ENCODE measurements at regions of chr17 and their contacts with region 1.

Region 1: GRCh38 chr17:7989781-7990655 is 12.4 kb upstream of the GUCY2D start:
- DNase-seq: peak; percentile 89
- H3K4me3 Mint-ChIP-seq: peak overlapping the region; percentile 71
- H3K27ac Mint-ChIP-seq: no peak overlapping the region
- H3K4me1 Mint-ChIP-seq: no peaks in the 10 kb centered on the region
- H3K27me3 Mint-ChIP-seq: peaks cover 18% of the 10 kb centered on the region
- CTCF ChIP-seq: peak; percentile 76

Region 2: DNA sequence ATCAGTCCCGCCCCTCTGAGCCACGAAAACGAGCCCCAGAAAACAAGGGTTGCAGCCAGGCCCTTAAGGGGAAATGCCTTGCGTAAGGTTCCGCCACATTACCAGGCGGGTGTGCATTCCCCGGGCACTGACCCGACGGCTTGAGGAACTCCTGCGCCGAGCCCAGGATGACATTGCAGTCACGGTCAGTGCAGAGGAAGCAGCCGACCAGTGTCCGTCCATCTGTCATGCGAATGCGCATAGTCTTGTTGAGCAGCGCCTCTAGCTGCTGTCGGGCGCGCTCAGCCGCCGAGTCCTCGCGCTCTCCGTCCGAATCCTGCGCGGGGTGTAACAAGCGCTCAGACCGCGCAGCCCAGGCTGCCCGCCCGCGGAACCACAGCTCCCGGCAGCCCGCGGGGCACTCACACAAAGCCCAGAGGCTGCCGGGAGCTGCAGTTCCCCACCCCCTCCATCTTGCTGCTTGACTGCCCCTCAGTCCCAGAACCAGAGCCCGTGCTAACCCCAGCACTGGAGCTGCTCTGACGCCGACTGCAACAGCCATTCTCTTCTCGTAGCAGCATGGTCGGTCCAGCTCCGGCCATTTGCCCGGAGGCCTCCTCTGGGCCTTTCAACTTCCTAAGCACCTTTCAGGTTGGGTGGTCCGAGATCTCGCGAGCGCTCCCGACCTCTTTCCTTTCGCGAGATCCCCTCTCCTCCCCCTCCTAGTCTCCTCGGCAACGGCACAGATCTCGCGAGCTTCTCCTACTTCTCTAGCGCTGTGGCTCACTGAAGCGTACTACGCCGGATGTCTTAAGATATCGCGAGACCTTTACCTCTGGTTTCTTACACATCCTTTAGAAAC is 132.9 kb before region 1 on chr17 and contains the start of gene NAA38:
- CTCF ChIA-PET with region 1: interaction called, 5 read pairs
- intact Hi-C with region 1: loop called (anchors 2 kb)
- DNase-seq: peak; percentile 91
- H3K4me3 Mint-ChIP-seq: no peak within 1 kb of the TSS
- H3K27ac Mint-ChIP-seq: no peak within 1 kb of the TSS
- H3K4me1 Mint-ChIP-seq: no peaks in the 10 kb centered on the region
- H3K27me3 Mint-ChIP-seq: no peaks in the 10 kb centered on the region
- CTCF ChIP-seq: no peak
- total RNA-seq, gene NAA38: 36.3 and 36.6 TPM in 2 replicates

Region 3: DNA sequence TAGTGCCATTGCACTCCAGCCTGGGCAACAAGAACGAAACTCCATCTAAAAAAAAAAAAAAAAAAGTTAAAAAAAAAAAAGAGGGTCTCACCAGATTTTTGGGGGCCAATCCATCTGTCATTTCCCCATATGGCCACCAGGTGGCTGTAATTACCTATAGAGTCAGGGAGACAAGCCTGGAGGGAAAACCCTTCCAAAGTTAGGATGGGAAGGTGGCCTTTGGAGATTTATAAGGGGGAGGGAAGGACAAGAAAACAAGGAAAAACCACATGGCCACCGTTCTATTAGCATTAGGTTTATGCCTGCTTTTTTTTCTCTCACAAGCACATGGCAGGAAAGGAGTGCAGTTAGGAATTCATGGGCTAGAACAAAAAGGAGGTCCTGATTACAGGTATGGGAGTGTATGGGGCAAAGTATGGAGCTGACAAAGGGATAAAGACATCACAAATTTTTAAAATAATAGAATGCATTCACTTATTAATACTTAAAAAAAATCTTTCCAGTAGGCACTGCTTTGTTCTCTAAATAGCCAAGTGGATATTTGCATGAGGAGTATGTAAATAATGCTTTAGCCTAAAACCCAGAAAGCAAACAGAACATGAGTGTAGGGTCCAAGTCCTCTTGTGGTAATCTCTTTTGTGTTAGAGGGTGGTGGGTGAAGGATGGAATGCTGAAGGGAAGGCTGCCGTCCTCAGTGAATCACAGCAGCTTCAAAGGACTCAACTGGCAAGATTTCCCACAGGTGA is 127.2 kb before region 1 on chr17:
- CTCF ChIA-PET with region 1: interaction called, 5 read pairs
- intact Hi-C with region 1: loop called (anchors 2 kb)
- DNase-seq: peak; percentile 32
- H3K4me3 Mint-ChIP-seq: no peak overlapping the region
- H3K27ac Mint-ChIP-seq: no peak overlapping the region
- H3K4me1 Mint-ChIP-seq: peaks cover 9% of the 10 kb centered on the region
- H3K27me3 Mint-ChIP-seq: no peaks in the 10 kb centered on the region
- CTCF ChIP-seq: peak; percentile 68

Region 4: GRCh38 chr17:7915611-7916382 is 74.2 kb before region 1 on chr17 and contains the start of gene RNF227:
- CTCF ChIA-PET with region 1: interaction called, 10 read pairs
- intact Hi-C with region 1: loop called (anchors 2 kb)
- DNase-seq: peak; percentile 83
- H3K4me3 Mint-ChIP-seq: peak within 1 kb of the TSS; percentile 66
- H3K27ac Mint-ChIP-seq: peak within 1 kb of the TSS; percentile 60
- H3K4me1 Mint-ChIP-seq: no peaks in the 10 kb centered on the region
- H3K27me3 Mint-ChIP-seq: no peaks in the 10 kb centered on the region
- CTCF ChIP-seq: no peak
- total RNA-seq, gene RNF227: 1.4 and 2.0 TPM in 2 replicates

Region 5: DNA sequence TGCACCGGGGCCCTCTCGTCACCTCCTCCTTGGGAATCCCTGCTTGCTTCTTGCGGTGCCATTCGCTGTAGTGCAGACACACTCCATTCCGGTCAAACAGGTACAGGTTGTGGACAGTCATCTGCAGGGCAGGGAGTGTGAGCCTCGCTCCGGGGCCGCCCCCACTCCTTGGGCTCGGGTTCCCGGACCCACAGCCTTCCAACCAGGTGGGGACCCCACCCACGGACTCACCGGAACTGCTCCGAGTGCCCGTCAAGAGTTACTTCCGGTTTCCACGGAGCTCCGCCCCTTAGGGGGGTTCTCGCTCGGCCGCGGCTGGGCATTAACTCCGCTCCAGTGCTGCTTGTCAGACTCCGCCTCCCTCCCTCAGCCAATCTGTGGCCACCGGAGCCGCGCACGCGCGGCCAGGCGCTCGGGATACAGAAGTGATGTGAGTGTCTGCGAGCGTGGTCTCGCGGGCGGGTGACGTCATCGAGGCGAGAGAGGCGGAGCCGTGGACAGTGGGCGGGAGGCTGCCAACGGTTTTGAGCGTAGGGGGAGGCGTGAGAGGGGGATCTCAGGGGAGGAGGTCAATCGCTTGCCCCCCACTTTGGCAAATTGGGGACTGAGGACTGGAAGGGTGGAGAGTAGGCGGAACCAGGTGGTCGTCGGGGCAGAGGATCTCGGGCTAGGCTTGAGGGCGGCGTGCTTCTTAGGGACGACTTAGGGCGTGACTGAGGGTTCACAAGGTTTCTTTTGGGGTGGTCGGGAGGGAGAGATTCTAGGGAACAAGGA is 58.1 kb before region 1 on chr17 and contains the starts of genes CNTROB and TRAPPC1:
- CTCF ChIA-PET with region 1: interaction called, 16 read pairs
- intact Hi-C with region 1: no loop called
- DNase-seq: peak; percentile 96
- H3K4me3 Mint-ChIP-seq: peak within 1 kb of the TSS; percentile 91
- H3K27ac Mint-ChIP-seq: peak within 1 kb of the TSS; percentile 85
- H3K4me1 Mint-ChIP-seq: peaks cover 20% of the 10 kb centered on the region
- H3K27me3 Mint-ChIP-seq: no peaks in the 10 kb centered on the region
- CTCF ChIP-seq: no peak
- total RNA-seq, gene CNTROB: 21.8 and 28.2 TPM in 2 replicates
- total RNA-seq, gene TRAPPC1: 87.8 and 106 TPM in 2 replicates

Region 6: GRCh38 chr17:8332678-8333077 is 342.7 kb after region 1 on chr17:
- CTCF ChIA-PET with region 1: no interaction called
- intact Hi-C with region 1: no loop called
- DNase-seq: no peak
- H3K4me3 Mint-ChIP-seq: no peak overlapping the region
- H3K27ac Mint-ChIP-seq: no peak overlapping the region
- H3K4me1 Mint-ChIP-seq: no peaks in the 10 kb centered on the region
- H3K27me3 Mint-ChIP-seq: peaks cover 26% of the 10 kb centered on the region
- CTCF ChIP-seq: no peak